MCF 10A (cell line): ENCODE measurements at regions of chr10 and their contacts with region 1.

Region 1: GRCh38 chr10:57338823-57339558 is 928.7 kb downstream of the IPMK start:
- DNase-seq: peak; percentile 56
- H3K4me3 Mint-ChIP-seq: no peak overlapping the region
- H3K27ac Mint-ChIP-seq: no peak overlapping the region
- H3K4me1 Mint-ChIP-seq: no peaks in the 10 kb centered on the region
- H3K27me3 Mint-ChIP-seq: peaks cover 6% of the 10 kb centered on the region
- CTCF ChIP-seq: peak; percentile 55

Region 2: DNA sequence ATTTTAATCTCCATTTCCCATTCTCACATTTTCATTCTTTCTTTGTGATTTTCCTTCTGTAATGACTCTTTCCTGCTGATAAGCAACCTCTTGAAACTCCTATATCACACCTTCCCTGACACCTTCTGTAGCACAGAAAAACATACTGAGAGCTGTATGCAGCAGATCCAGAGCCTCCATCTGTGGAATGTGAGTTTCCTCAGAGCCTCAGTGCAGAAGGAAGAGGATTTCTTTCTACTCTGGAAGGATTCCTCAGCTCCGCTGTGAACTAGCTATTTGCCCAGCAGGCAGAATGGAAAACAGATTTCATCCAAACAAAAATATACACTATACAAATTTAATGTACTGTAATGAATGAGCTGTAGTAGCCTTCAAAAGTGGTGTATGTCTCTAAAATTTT is 136.6 kb before region 1 on chr10:
- CTCF ChIA-PET with region 1: no interaction called
- POLR2A ChIA-PET with region 1: no interaction called
- intact Hi-C with region 1: no loop called
- DNase-seq: no peak
- H3K4me3 Mint-ChIP-seq: no peak overlapping the region
- H3K27ac Mint-ChIP-seq: no peak overlapping the region
- H3K4me1 Mint-ChIP-seq: no peaks in the 10 kb centered on the region
- H3K27me3 Mint-ChIP-seq: no peaks in the 10 kb centered on the region
- CTCF ChIP-seq: no peak

Region 3: GRCh38 chr10:57599440-57599839 is 260.4 kb after region 1 on chr10:
- CTCF ChIA-PET with region 1: no interaction called
- POLR2A ChIA-PET with region 1: no interaction called
- intact Hi-C with region 1: loop called (anchors 5 kb)
- DNase-seq: no peak
- H3K4me3 Mint-ChIP-seq: no peak overlapping the region
- H3K27ac Mint-ChIP-seq: no peak overlapping the region
- H3K4me1 Mint-ChIP-seq: no peaks in the 10 kb centered on the region
- H3K27me3 Mint-ChIP-seq: peaks cover 34% of the 10 kb centered on the region
- CTCF ChIP-seq: no peak

Region 4: GRCh38 chr10:58064714-58065528 is 725.9 kb after region 1 on chr10:
- CTCF ChIA-PET with region 1: interaction called, 6 read pairs
- POLR2A ChIA-PET with region 1: no interaction called
- intact Hi-C with region 1: loop called (anchors 1 kb)
- DNase-seq: peak; percentile 62
- H3K4me3 Mint-ChIP-seq: no peak overlapping the region
- H3K27ac Mint-ChIP-seq: peak overlapping the region; percentile 30
- H3K4me1 Mint-ChIP-seq: peaks cover 6% of the 10 kb centered on the region
- H3K27me3 Mint-ChIP-seq: no peaks in the 10 kb centered on the region
- CTCF ChIP-seq: peak; percentile 90